OCI-LY7 (cell line): ENCODE measurements at regions of chr2 and their contacts with region 1.

Region 1: DNA sequence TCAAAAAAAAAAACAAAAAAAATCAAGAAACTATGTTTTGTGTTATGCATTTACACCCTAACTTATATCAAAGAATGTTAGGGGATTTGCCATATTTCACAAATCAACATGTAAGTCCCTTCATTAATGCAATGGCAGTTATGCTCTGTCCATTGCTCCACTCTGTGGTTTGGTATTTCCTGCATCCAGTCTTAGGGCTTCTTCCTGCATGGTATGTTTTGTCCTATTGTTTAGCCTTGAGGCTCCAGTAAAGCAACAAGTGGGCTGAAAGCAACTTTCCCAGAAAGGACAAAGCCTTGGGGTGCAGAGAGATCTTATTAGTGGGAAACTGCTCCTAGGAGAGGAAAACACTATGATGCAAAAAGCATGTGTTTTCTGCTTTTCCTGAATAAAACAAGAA is 474.1 kb downstream of the IRS1 start:
- DNase-seq: no peak
- H3K4me3 ChIP-seq: no peak overlapping the region
- H3K27ac ChIP-seq: no peak overlapping the region
- H3K4me1 ChIP-seq: no peaks in the 10 kb centered on the region
- CTCF ChIP-seq: no peak

Region 2: DNA sequence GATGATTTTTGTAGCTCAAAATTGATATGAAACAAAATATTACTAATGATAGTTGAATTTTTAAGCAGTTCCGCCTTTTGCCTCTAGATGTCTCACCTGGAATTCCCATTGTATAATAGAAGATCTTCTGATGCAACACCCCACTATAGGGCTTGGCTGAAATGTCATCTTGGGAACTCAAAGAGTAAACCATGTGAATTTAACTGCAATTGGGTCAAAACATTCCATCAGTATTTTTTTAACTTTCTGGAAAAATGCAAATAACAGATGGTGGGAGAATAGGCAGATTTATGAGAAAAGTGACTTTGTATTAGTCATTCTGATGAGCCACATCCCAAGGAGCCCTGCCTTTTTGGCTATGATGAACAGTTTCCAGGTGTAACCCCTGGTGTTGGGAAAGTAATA is 436.1 kb before region 1 on chr2:
- CTCF ChIA-PET with region 1: no interaction called
- POLR2A ChIA-PET with region 1: no interaction called
- intact Hi-C with region 1: loop called (anchors 10 kb)
- DNase-seq: peak; percentile 45
- H3K4me3 ChIP-seq: no peak overlapping the region
- H3K27ac ChIP-seq: no peak overlapping the region
- H3K4me1 ChIP-seq: no peaks in the 10 kb centered on the region
- CTCF ChIP-seq: peak; percentile 88

Region 3: DNA sequence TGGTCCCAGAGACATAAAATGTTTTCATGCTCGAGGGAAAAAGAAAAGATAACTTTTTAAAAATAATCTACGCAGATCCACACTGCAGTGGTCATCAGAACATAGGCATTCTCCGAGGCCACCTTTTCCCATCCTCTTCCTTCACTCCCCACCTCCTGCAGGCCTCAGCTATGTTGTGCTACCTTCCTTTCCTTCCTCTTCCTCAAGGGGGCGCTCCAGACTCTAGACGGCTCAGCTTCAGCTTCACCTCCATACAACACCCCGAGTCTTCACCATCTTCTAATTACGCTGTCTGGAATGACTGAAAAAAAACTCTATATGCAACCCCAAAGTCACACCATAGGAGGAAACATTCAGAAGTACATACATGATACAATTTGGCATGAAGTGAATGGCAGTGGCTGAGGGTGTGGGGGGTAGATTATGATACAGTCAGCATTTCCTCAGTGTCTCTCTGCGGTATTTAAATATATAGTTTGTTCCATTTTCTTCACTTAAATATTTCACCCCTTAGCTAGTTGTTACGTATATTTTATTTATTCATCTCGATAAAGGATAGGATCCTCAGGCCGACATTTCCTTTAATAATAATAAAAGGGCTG is 109.5 kb before region 1 on chr2:
- CTCF ChIA-PET with region 1: no interaction called
- POLR2A ChIA-PET with region 1: no interaction called
- intact Hi-C with region 1: no loop called
- DNase-seq: peak; percentile 56
- H3K4me3 ChIP-seq: no peak overlapping the region
- H3K27ac ChIP-seq: no peak overlapping the region
- H3K4me1 ChIP-seq: no peaks in the 10 kb centered on the region
- CTCF ChIP-seq: peak; percentile 91